AG04449 (cell line): ENCODE measurements at regions of chr14 and their contacts with region 1.

Region 1: DNA sequence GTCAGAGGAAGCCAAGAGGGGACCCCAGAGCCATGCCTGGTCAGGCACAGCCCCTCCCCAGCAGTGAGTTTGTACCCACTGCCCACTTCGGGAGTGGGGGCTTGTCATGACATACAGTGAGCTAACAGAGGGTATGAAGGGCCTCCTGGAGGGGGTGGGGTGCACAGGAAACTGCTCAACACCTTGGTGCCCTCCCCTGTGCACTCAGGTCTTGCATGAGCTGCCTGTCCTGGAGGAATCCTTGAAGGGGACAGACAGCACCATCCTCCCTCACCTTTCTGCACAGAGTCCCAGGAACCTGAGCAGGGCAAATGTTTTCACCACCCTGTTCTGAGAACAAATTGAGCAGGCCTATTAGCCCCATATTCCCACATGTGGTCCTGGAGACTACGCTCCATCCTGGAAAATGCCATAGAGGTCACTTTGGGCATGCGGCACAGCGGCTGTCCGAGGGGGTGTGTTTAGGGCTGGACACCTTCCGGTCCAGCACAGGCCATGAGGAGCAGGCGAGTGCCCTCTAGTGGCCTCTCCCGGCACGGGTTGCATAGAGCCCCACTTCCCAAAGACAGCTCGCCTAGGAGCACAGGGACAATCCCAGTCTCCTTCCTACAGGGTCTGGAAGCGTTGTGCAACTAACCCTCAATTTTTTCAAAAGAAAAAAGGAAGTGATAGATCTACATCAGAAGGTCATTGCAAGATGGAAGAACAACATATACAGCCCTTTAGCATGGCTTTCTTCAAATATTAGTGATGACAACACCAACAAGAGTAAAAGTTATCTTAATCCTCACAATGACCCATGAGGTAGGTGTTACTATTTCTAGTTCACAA is 31.9 kb upstream of the ZFP36L1 start:
- DNase-seq: no peak
- H3K4me3 ChIP-seq: no peak overlapping the region
- CTCF ChIP-seq: peak; percentile 93

Region 2: GRCh38 chr14:67883717-67884116 is 941.0 kb before region 1 on chr14:
- CTCF ChIA-PET with region 1: interaction called, 83 read pairs
- POLR2A ChIA-PET with region 1: no interaction called
- DNase-seq: no peak
- H3K4me3 ChIP-seq: no peak overlapping the region
- CTCF ChIP-seq: no peak

Region 3: DNA sequence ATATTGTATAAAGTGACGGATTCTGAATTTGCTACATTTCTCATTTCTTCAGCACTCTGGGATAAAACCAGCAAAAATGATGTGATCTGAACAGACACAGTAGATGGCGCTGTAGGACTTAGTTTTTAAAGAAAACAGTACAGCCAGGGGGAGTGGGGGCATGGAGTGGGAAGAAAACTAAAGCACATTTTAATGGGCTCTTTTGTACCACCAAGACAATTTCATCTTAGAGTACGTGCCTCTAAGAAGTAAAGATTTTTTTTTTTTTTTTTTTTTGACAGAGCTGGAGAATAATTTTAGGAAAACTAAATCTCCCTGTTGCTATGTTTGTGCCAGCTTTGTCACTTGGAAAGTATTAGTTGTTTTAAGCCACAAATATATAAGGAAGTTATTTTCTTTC is 880.8 kb before region 1 on chr14:
- CTCF ChIA-PET with region 1: interaction called, 58 read pairs
- POLR2A ChIA-PET with region 1: no interaction called
- DNase-seq: no peak
- H3K4me3 ChIP-seq: no peak overlapping the region
- CTCF ChIP-seq: peak; percentile 43

Region 4: DNA sequence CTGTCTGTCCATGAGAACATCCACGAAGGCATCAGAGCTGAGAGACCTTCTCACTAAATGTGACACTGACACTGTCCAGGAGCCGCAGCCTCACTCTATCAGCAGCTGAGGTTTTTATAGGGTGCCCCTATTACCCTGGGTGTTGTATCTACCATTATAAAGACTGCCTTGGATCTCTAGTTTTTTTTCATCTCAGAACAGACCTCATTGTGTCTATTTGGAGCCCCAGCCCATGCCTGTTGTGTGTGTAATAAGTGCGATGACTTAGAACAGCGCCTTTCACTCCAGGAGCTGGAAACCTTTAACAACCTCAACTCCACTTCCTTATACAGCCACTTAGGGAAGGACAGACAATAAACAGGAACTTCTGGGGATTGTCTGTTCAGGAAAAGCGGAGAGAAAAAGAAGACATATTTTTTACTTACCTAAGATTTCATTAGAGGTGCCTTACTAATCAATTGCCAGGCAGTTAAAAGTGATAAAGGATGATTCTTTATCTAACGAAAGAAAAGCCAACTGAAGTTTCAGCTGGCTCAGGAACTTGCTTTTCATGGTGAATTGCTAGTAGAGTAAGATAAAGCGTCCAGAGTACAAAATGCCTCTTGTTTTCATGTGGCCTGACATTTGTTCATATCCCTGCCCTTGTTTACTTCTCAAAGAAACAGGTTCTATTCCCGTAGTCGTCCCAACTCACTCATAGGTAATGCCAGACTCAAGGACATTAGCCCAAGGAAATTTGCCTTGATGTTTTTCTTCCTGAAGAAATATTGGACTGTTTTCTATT is 584.6 kb before region 1 on chr14:
- CTCF ChIA-PET with region 1: interaction called, 184 read pairs
- POLR2A ChIA-PET with region 1: no interaction called
- DNase-seq: no peak
- H3K4me3 ChIP-seq: no peak overlapping the region
- CTCF ChIP-seq: no peak